HepG2 (cell line): ENCODE measurements at regions of chr10 and their contacts with region 1.

Region 1: DNA sequence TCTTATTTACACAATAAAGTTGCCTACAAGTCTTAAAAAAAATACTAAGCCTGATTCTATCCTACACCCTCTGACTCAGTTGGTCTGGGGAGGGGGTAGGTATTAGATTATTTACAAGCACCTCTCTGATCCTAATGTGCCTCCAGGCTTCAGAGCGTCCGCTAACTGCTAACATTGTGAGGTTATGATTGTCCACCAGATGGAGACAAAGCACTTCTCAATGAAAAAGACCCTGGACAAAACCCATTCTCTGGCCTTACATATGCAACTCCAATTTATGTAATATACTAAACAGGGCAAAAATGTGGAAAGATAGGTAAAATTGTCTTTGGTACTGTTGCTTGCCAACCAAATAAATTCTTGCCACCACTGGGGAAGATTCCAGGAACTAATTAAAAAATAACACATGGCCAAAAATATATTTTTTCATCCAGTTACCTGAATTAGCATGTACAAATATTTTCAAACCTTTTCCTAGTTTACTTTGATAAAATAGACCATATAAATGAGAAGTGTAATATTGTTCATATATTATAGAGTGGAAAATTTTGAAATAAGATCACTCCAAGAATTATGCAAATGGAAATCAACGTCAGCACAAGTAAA is 92.4 kb downstream of the KIF20B start:
- DNase-seq: peak; percentile 73
- ATAC-seq: peak; percentile 93
- H3K4me3 ChIP-seq: no peak overlapping the region
- H3K27ac ChIP-seq: no peak overlapping the region
- H3K4me1 ChIP-seq: peaks cover 29% of the 10 kb centered on the region
- H3K27me3 ChIP-seq: no peaks in the 10 kb centered on the region
- CTCF ChIP-seq: peak; percentile 83
- EP300 ChIP-seq: no peak
- POLR2A ChIP-seq: no peak
- RAD21 ChIP-seq: peak; percentile 88

Region 2: GRCh38 chr10:89426230-89426868 is 367.4 kb before region 1 on chr10:
- CTCF ChIA-PET with region 1: interaction called, 4 read pairs
- POLR2A ChIA-PET with region 1: no interaction called
- in situ Hi-C with region 1: no loop called
- intact Hi-C with region 1: loop called (anchors 5 kb)
- DNase-seq: peak; percentile 41
- ATAC-seq: peak; percentile 88
- H3K4me3 ChIP-seq: no peak overlapping the region
- H3K27ac ChIP-seq: no peak overlapping the region
- H3K4me1 ChIP-seq: peaks cover 20% of the 10 kb centered on the region
- H3K27me3 ChIP-seq: no peaks in the 10 kb centered on the region
- CTCF ChIP-seq: peak; percentile 84
- EP300 ChIP-seq: no peak
- POLR2A ChIP-seq: no peak
- RAD21 ChIP-seq: peak; percentile 62

Region 3: GRCh38 chr10:89946106-89946505 is 152.4 kb after region 1 on chr10:
- CTCF ChIA-PET with region 1: no interaction called
- POLR2A ChIA-PET with region 1: no interaction called
- in situ Hi-C with region 1: loop called (anchors 10 kb)
- intact Hi-C with region 1: loop called (anchors 10 kb)
- DNase-seq: no peak
- ATAC-seq: no peak
- H3K4me3 ChIP-seq: peak overlapping the region in 1 of 3 experiments; percentile 10; a peak in 2 of 6 replicates
- H3K27ac ChIP-seq: no peak overlapping the region
- H3K4me1 ChIP-seq: no peaks in the 10 kb centered on the region
- H3K27me3 ChIP-seq: no peaks in the 10 kb centered on the region
- CTCF ChIP-seq: no peak
- EP300 ChIP-seq: no peak
- POLR2A ChIP-seq: no peak
- RAD21 ChIP-seq: no peak

Region 4: GRCh38 chr10:90319188-90319914 is 525.6 kb after region 1 on chr10:
- CTCF ChIA-PET with region 1: no interaction called
- POLR2A ChIA-PET with region 1: no interaction called
- in situ Hi-C with region 1: loop called (anchors 25 kb)
- intact Hi-C with region 1: no loop called
- DNase-seq: peak; percentile 43
- ATAC-seq: no peak; the same call in 2 of the 3 replicates
- H3K4me3 ChIP-seq: no peak overlapping the region
- H3K27ac ChIP-seq: no peak overlapping the region
- H3K4me1 ChIP-seq: no peaks in the 10 kb centered on the region
- H3K27me3 ChIP-seq: no peaks in the 10 kb centered on the region
- CTCF ChIP-seq: no peak
- EP300 ChIP-seq: no peak
- POLR2A ChIP-seq: no peak
- RAD21 ChIP-seq: no peak

Region 5: DNA sequence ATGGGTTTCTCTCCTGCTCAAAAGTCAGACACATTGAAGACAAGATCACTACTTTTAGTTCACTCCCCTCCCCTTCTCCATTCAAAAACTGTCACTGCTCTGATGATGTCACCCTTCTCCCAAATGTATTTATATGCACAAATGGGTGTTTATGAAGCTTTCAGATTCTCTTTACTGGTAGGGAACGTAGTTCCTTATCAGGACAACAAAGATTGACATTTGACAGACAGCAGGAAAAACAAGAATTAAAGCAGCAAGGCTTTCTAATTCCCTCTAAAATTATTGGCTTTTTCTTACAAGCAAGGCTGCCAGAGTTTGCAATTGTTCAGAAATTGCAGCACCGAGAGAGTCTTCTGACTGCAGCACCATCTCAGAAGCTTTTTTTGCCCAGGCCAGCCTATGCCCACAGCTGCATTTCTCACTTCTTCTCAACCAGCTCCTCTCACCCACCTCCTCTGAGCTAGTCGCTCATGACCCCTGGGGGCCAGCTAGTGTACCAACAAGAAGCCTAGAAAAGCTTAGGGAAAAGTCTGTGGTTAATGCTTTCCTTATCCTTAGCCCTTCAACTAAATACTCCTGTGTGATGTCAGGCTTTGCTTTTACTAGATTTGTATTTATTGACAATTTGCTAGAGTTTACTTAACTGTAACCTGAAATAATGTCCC is 799.0 kb after region 1 on chr10:
- CTCF ChIA-PET with region 1: interaction called, 13 read pairs
- POLR2A ChIA-PET with region 1: no interaction called
- in situ Hi-C with region 1: loop called (anchors 5 kb)
- intact Hi-C with region 1: loop called (anchors 1 kb)
- DNase-seq: peak; percentile 42
- ATAC-seq: peak; percentile 96
- H3K4me3 ChIP-seq: no peak overlapping the region
- H3K27ac ChIP-seq: no peak overlapping the region
- H3K4me1 ChIP-seq: peaks cover 10% of the 10 kb centered on the region
- H3K27me3 ChIP-seq: no peaks in the 10 kb centered on the region
- CTCF ChIP-seq: peak; percentile 62
- EP300 ChIP-seq: no peak
- POLR2A ChIP-seq: no peak
- RAD21 ChIP-seq: no peak

Region 6: GRCh38 chr10:90787393-90788198 is 993.8 kb after region 1 on chr10:
- CTCF ChIA-PET with region 1: interaction called, 3 read pairs
- POLR2A ChIA-PET with region 1: no interaction called
- in situ Hi-C with region 1: no loop called
- intact Hi-C with region 1: loop called (anchors 2 kb)
- DNase-seq: peak; percentile 9
- ATAC-seq: peak; percentile 78
- H3K4me3 ChIP-seq: no peak overlapping the region
- H3K27ac ChIP-seq: no peak overlapping the region
- H3K4me1 ChIP-seq: no peaks in the 10 kb centered on the region
- H3K27me3 ChIP-seq: peaks cover 0 to 9% of the 10 kb centered on the region in 2 experiments; a peak in 3 of 5 replicates
- CTCF ChIP-seq: peak; percentile 65
- EP300 ChIP-seq: no peak
- POLR2A ChIP-seq: no peak
- RAD21 ChIP-seq: no peak